ENCODE measurements at regions of chr6 and their contacts with region 1.

Region 1: DNA sequence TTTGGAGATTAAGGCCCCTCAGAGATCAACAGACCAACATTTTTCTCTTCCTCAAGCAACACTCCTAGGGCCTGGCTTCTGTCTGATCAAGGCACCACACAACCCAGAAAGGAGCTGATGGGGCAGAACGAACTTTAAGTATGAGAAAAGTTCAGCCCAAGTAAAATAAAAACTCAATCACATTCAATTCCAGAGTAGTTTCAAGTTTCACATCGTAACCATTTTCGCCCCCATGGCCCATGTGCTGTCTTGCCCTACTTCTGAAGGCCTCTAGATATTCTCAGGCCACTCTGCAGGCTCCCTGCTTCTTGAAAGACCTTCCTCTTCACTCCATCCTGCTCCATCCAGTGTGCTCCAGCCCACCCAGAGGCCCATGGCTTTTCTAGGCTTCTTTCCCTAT is 4.2 kb downstream of the IL17A start:
- DNase-seq: no peak
- H3K4me3 ChIP-seq: no peak overlapping the region
- H3K27ac ChIP-seq: no peak overlapping the region
- H3K4me1 ChIP-seq: no peaks in the 10 kb centered on the region
- H3K27me3 ChIP-seq: no peaks in the 10 kb centered on the region
- CTCF ChIP-seq: no peak
- POLR2A ChIP-seq: no peak

Region 2: DNA sequence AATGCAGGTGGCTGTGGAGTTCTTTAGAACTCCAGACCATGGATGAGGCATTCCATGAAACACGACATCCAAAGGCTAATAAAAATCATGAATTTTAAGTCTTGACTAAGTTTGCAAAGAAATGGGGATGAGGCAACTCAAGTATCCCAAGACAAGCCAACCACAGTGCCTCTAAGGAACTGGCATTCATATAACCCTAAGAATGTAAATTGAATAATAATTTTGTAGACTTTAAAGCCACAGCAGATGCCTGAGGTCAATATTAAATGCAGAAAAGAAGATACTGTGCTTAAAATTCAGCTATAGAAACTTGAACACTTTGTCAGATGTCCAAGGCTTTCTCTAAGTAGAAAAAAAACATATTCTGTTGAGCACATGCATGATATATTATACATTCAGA is 1317.2 kb before region 1 on chr6:
- intact Hi-C with region 1: loop called (anchors 10 kb)
- DNase-seq: no peak
- H3K4me3 ChIP-seq: no peak overlapping the region
- H3K27ac ChIP-seq: no peak overlapping the region
- H3K4me1 ChIP-seq: no peaks in the 10 kb centered on the region
- H3K27me3 ChIP-seq: no peaks in the 10 kb centered on the region
- CTCF ChIP-seq: no peak
- POLR2A ChIP-seq: no peak

Region 3: DNA sequence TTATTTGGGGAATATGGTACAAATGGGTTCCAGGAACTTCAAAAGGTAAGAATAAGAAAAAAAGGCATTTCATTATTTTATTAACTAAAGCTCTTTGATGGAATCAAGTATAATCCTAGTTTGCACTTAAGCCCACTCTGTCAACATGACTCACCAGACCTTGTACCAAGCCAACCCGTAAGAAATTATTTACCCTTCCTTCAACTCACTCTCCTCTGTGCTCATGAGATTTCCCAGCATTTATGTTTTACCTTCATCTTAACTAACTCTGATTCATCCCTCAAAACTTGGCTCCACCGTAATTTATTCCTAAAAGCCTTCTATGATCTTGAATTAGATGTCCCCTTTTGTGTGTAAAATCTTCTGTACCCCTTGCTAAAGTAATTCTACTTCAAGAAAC is 411.7 kb before region 1 on chr6:
- intact Hi-C with region 1: no loop called
- DNase-seq: no peak
- H3K4me3 ChIP-seq: no peak overlapping the region
- H3K27ac ChIP-seq: no peak overlapping the region
- H3K4me1 ChIP-seq: no peaks in the 10 kb centered on the region
- H3K27me3 ChIP-seq: no peaks in the 10 kb centered on the region
- CTCF ChIP-seq: no peak
- POLR2A ChIP-seq: no peak

Region 4: GRCh38 chr6:53348371-53349208 is 1158.2 kb after region 1 on chr6 and contains the start of gene ELOVL5:
- intact Hi-C with region 1: no loop called
- DNase-seq: peak; percentile 96 to 98
- H3K4me3 ChIP-seq: peak within 1 kb of the TSS; percentile 79 to 90
- H3K27ac ChIP-seq: peak within 1 kb of the TSS; percentile 94 to 95
- H3K4me1 ChIP-seq: no peaks in the 10 kb centered on the region
- H3K27me3 ChIP-seq: no peaks in the 10 kb centered on the region
- CTCF ChIP-seq: peak in 1 of 4 experiments; percentile 16
- POLR2A ChIP-seq: peak; percentile 84 to 96
- total RNA-seq, gene ELOVL5: 26.4 to 80.7 (median 48.4) TPM

Measured in uterus (tissue), 4 donors.